Activated T-helper 1 cell treated with anti-CD3 and anti-CD28 coated beads, Interleukin-12 subunit alpha, Interleukin-12 subunit beta, Interleukin-2, Interleukin-4 antibody, amounts not matched to agents 30 ng/mL and 10 ng/mL and 1 ng/mL, durations not matched to agents 14 hours and 24 hours and 36 hours (primary cell): ENCODE measurements at regions of chr11 and their contacts with region 1.

Region 1: DNA sequence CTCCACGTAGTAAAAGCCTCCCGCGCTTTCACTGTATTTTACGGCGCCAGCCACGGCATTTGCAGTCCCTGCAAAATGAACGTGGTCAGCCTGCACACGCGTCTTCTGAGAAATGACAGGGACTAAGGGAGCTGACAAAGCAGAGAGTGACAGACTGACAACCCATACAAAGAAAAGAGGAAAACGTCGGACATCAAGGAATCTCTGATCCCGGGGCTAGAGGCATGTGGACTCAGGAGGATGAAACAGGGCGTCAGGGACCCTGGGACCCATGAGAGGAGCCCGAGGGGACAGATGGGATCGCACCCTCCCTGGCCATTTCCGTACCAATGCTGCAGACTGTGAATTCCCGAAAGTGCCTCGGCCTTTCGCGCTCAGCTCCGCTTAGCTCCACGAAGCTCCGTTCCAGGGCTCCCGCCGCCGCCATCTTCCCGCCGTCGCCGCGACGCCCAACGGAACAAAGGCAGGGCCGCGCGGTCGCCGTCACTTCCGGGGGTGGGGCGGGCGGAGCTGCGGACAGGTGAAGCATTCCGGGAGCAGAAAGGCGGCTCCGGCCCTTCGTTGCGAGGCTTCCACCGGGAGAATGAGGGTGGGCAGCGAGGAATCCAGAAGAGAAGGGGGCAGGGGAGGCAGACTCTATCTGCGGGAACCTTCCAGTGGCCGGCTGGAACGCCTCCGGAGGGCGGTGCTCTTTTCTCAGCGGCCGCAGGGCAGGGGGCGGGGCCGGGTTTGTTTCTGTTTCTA is at the start of gene NUP160:
- DNase-seq: peak; percentile 86
- H3K4me3 Mint-ChIP-seq: peak within 1 kb of the TSS; percentile 98
- H3K27ac Mint-ChIP-seq: peak within 1 kb of the TSS; percentile 100
- H3K4me1 Mint-ChIP-seq: peaks cover 47% of the 10 kb centered on the region
- H3K27me3 Mint-ChIP-seq: no peaks in the 10 kb centered on the region
- total RNA-seq, gene NUP160: 91.9 and 98.6 TPM in 2 replicates

Region 2: DNA sequence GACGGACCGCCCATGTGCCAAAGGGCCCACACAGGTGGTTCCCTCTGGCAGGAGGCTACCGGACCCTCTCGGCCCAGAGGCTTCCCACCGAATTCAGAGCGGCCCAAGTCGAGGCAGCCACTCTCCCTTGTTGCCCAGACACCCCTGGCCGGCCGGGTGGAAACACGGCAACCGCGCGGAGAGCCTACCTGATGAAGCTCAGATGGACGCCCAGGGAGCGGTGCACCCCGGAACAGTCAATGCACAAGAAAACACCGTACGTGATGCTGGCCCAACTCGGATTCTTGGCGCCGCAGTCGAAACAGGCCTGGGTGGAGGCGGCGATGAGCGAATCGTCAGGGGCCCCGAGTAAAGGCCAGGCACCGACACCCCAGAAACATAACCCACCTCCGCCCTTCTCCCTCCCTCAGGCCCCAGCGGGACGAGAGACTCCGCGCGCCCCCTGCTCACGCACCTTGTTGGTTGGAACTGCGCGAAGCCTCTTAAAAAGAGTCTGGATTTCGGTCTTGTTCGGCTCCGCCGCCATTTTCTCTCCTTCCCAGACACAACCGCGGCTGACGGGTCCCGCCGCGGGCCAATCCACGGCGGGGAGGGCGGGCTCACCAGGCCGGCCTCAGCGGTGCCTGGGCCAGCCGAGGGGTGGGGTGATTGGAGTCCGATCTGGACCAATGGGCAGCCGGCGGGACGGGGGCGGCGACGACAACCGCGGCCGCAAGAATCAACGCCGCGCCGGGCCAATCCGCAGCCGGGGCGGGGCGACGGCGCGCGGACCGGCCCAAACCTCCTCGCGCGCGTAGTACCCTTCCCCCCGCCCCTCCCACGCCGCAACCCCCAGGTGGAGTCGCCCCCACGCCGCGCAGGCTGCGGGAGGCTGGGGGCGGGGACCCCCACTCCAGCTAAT is 671.5 kb before region 1 on chr11 and contains the start of gene ARFGAP2:
- intact Hi-C with region 1: loop called (anchors 1 kb)
- DNase-seq: peak; percentile 96
- H3K4me3 Mint-ChIP-seq: peak within 1 kb of the TSS; percentile 97
- H3K27ac Mint-ChIP-seq: peak within 1 kb of the TSS; percentile 100
- H3K4me1 Mint-ChIP-seq: peaks cover 36% of the 10 kb centered on the region
- H3K27me3 Mint-ChIP-seq: no peaks in the 10 kb centered on the region
- total RNA-seq, gene ARFGAP2: 111 and 116 TPM in 2 replicates

Region 3: GRCh38 chr11:47407746-47408590 is 440.1 kb before region 1 on chr11 and contains the start of gene SLC39A13:
- intact Hi-C with region 1: loop called (anchors 1 kb)
- DNase-seq: peak; percentile 93
- H3K4me3 Mint-ChIP-seq: peak within 1 kb of the TSS; percentile 94
- H3K27ac Mint-ChIP-seq: peak within 1 kb of the TSS; percentile 92
- H3K4me1 Mint-ChIP-seq: peaks cover 21% of the 10 kb centered on the region
- H3K27me3 Mint-ChIP-seq: no peaks in the 10 kb centered on the region
- total RNA-seq, gene SLC39A13: 15.5 and 16.2 TPM in 2 replicates

Region 4: GRCh38 chr11:47642099-47642855 is 205.8 kb before region 1 on chr11 and contains the start of gene MTCH2:
- intact Hi-C with region 1: loop called (anchors 1 kb)
- DNase-seq: peak; percentile 95
- H3K4me3 Mint-ChIP-seq: peak within 1 kb of the TSS; percentile 96
- H3K27ac Mint-ChIP-seq: peak within 1 kb of the TSS; percentile 97
- H3K4me1 Mint-ChIP-seq: peaks cover 30% of the 10 kb centered on the region
- H3K27me3 Mint-ChIP-seq: no peaks in the 10 kb centered on the region
- total RNA-seq, gene MTCH2: 116 and 118 TPM in 2 replicates

Region 5: GRCh38 chr11:47797633-47798032 is 50.4 kb before region 1 on chr11:
- intact Hi-C with region 1: loop called (anchors 1 kb)
- DNase-seq: peak; percentile 9
- H3K4me3 Mint-ChIP-seq: no peak overlapping the region
- H3K27ac Mint-ChIP-seq: peak overlapping the region; percentile 89
- H3K4me1 Mint-ChIP-seq: peaks cover 10% of the 10 kb centered on the region
- H3K27me3 Mint-ChIP-seq: no peaks in the 10 kb centered on the region

Region 6: GRCh38 chr11:47932544-47932943 is 84.5 kb after region 1 on chr11:
- intact Hi-C with region 1: loop called (anchors 5 kb)
- DNase-seq: no peak
- H3K4me3 Mint-ChIP-seq: no peak overlapping the region
- H3K27ac Mint-ChIP-seq: no peak overlapping the region
- H3K4me1 Mint-ChIP-seq: peaks cover 23% of the 10 kb centered on the region
- H3K27me3 Mint-ChIP-seq: no peaks in the 10 kb centered on the region

Region 7: GRCh38 chr11:48109046-48109666 is 261.1 kb after region 1 on chr11:
- intact Hi-C with region 1: loop called (anchors 2 kb)
- DNase-seq: no peak
- H3K4me3 Mint-ChIP-seq: peak overlapping the region; percentile 54
- H3K27ac Mint-ChIP-seq: peak overlapping the region; percentile 88
- H3K4me1 Mint-ChIP-seq: peaks cover 68% of the 10 kb centered on the region
- H3K27me3 Mint-ChIP-seq: no peaks in the 10 kb centered on the region